RWPE1 (cell line): ENCODE measurements at regions of chr19 and their contacts with region 1.

Region 1: DNA sequence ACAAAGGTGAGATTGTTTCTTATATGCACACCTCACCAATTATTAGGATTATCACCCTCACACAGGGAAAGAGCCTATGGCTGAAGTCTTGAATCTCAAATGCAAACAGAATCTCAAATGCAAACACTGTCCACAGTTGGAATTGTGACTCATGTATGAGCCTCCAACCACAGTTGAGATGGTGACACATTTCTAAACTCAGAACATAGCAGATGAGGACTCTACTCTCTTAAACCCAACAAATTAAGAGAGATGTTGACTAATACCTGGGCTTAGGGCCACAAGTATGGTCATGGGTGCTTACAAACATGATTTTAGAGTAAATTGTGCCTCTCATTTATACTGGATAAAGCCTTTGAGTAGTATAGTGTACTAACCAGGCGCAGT is 32.4 kb upstream of the ZNF254 start:
- DNase-seq: peak; percentile 53
- H3K27ac ChIP-seq: peak overlapping the region; percentile 60
- CTCF ChIP-seq: no peak

Region 2: DNA sequence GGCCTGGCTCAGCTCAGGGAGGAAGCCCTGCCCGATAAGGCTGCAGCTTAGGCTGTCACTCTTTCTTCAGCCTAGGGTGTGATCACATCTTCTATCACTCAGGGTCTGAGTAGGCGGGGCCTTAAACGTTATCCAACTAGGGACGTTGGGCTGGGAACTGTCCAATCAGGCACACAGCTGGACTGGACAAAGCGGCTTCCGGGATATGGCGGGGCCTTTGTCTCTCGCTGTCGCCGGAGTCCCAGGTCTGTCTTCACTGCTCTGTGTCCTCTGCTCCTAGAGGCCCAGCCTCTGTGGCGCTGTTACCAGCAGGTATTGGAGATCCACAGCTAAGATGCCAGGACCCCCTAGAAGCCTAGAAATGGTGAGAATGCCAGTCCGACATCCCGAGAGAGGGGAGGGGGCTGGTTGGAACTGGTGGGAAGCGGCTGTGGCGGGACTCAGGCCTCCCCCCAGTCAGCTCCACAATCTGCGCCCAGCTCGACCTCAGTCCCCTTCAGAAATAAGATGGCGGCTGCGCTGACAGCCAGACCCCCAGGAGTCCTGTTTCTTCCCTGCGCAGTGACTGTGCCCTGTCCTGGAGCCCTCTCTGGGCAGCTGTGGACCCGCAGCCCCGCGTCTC is 32.5 kb after region 1 on chr19 and contains the start of gene ZNF254:
- CTCF ChIA-PET with region 1: interaction called, 12 read pairs
- POLR2A ChIA-PET with region 1: interaction called, 6 read pairs
- DNase-seq: peak; percentile 92
- H3K27ac ChIP-seq: peak within 1 kb of the TSS; percentile 87
- CTCF ChIP-seq: no peak